Heart right ventricle (tissue), 16 donors: ENCODE measurements at regions of chr17 and their contacts with region 1.

Region 1: GRCh38 chr17:11814655-11815262 is 182.5 kb downstream of the ZNF18 start:
- DNase-seq: no peak
- ATAC-seq: peak in 2 of 8 donors; percentile 39 to 44
- H3K4me3 ChIP-seq: no peak overlapping the region
- H3K27ac ChIP-seq: no peak overlapping the region
- H3K4me1 ChIP-seq: peaks cover 0 to 35% (median 13%) of the 10 kb centered on the region in 9 donors
- H3K27me3 ChIP-seq: no peaks in the 10 kb centered on the region
- CTCF ChIP-seq: no peak

Region 2: DNA sequence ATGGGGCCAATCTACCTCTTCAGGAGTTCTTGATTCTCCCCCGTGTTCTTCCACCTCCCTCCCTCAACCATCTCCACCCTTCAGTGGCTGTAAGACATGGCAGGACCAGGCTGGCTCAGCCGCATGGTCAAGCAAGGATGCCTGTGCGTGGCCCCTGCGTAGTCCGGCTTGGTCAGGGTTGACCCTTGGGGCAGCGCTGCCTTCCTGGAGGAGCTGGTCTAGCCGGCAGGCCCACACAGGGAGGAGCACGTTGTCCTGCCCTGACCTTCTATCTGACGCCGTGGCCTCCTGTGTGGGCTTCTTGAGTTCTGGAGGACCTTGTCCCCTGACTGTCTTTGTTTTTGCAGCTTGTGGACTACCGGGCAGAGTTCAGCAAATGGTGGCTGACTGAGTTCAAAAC is 46.7 kb before region 1 on chr17:
- intact Hi-C with region 1: loop called in 1 of 10 experiments (anchors 2 kb)
- DNase-seq: no peak
- ATAC-seq: no peak
- H3K4me3 ChIP-seq: no peak overlapping the region
- H3K27ac ChIP-seq: no peak overlapping the region
- H3K4me1 ChIP-seq: peaks cover 0 to 31% (median 4%) of the 10 kb centered on the region in 9 donors
- H3K27me3 ChIP-seq: peaks cover 0 to 11% (median 0%) of the 10 kb centered on the region in 7 donors
- CTCF ChIP-seq: no peak

Region 3: DNA sequence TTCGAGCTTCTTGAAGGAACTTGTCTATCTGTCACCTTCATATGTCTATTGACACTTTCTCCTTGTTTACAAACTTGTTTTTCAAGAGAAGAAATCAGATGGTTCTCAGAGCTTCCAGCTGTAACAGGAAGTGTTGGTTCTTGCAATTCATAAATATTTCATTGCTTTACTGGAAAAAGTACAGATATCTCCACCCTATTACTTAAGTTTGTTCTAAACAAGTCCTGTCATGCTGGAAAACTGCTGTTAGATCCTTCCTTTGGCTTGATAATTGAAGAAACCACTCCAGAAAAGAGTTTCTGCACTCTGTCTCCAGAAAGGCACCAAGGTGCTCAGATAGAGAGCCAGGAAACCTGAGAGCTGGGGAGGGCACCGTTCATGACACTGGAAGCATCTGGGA is 34.9 kb before region 1 on chr17:
- intact Hi-C with region 1: no loop called
- DNase-seq: no peak
- ATAC-seq: no peak
- H3K4me3 ChIP-seq: no peak overlapping the region
- H3K27ac ChIP-seq: no peak overlapping the region
- H3K4me1 ChIP-seq: peaks cover 0 to 8% (median 0%) of the 10 kb centered on the region in 9 donors
- H3K27me3 ChIP-seq: no peaks in the 10 kb centered on the region
- CTCF ChIP-seq: no peak

Region 4: GRCh38 chr17:11871773-11872172 is 57.0 kb after region 1 on chr17:
- intact Hi-C with region 1: loop called in 1 of 10 experiments (anchors 10 kb)
- DNase-seq: no peak
- ATAC-seq: no peak
- H3K4me3 ChIP-seq: no peak overlapping the region
- H3K27ac ChIP-seq: no peak overlapping the region
- H3K4me1 ChIP-seq: no peaks in the 10 kb centered on the region
- H3K27me3 ChIP-seq: no peaks in the 10 kb centered on the region
- CTCF ChIP-seq: no peak

Region 5: GRCh38 chr17:11950771-11951519 is 136.2 kb after region 1 on chr17:
- intact Hi-C with region 1: no loop called
- DNase-seq: no peak
- ATAC-seq: no peak
- H3K4me3 ChIP-seq: no peak overlapping the region
- H3K27ac ChIP-seq: no peak overlapping the region
- H3K4me1 ChIP-seq: peaks cover 0 to 8% (median 5%) of the 10 kb centered on the region in 9 donors
- H3K27me3 ChIP-seq: no peaks in the 10 kb centered on the region
- CTCF ChIP-seq: no peak